ENCODE measurements at regions of chr12 and their contacts with region 1.

Region 1: DNA sequence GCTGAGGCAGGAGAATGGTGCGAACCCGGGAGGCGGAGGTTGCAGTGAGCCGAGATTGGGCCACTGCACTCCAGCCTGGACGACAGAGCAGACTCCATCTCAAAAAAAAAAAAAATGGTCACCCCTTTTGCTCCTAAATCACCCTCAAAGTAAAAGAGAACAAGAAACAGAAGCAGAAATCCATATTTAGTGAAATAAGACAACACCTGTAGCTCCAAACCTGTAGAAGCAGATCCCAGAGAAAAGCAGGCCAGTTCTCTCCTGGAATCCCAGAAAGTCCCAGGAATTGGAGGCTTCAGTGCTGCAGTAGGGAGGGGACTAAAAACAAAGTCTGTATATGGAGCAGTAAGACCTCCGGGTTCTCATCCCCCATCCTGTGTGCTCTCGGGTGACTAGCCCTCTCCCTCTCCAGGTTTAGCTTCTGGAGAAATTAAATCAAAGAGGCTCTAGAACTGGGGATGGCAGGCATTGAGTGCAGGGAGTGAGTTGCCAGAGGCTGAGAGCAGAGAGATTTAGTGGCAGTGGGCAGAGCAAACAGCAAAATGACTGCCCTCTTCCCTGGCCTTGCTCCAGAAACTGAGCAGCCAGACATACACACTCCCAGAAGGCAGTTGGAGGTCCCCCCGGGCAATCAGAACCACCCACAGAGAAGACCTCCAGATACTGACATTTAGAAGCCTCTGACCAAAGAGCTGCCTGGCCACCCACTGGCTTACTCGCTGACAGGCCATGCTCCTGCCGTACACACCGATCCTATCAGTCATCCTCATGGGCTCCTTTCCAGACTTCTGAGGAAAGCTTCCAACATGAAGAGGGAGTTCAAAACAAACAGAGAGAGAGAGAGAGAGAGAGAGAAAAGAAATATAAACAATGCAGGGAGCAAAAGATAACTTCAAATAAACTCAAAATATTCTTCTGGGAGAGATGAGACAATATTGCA is 6.3 kb upstream of the MLXIP start:
- DNase-seq: peak; percentile 67 to 75 (median 68)
- ATAC-seq: peak; percentile 84 to 85
- H3K4me3 ChIP-seq: no peak overlapping the region
- H3K27ac ChIP-seq: peak overlapping the region; percentile 82
- H3K4me1 ChIP-seq: peaks cover 5% of the 10 kb centered on the region
- H3K27me3 ChIP-seq: no peaks in the 10 kb centered on the region

Region 2: DNA sequence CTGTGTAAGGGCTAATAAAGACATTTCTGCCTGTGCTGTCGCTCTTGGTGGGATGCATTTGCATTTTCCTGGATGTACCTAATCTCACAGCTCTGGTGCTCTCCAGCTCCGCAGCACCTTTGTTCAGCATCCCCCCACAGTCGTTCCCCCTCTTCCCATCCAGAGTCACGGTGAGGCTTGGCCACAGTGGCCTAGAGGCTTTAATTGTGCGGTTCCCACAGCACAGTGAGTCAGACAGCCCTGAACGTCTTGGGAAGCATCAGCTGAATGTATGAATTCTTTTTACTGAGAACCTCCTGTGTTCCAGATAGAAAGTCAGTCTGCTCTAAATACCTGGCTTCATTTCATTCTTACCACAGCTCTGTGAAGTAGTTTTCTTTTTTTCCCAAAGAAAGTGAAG is 35.0 kb after region 1 on chr12:
- intact Hi-C with region 1: loop called in 1 of 4 experiments (anchors 5 kb)
- DNase-seq: peak in 1 of 3 donors; percentile 30
- ATAC-seq: peak in 1 of 2 donors; percentile 5
- H3K4me3 ChIP-seq: no peak overlapping the region
- H3K27ac ChIP-seq: no peak overlapping the region
- H3K4me1 ChIP-seq: peaks cover 16% of the 10 kb centered on the region
- H3K27me3 ChIP-seq: no peaks in the 10 kb centered on the region